Endothelial cell of umbilical vein (primary cell): ENCODE measurements at regions of chrX and their contacts with region 1.

Region 1: DNA sequence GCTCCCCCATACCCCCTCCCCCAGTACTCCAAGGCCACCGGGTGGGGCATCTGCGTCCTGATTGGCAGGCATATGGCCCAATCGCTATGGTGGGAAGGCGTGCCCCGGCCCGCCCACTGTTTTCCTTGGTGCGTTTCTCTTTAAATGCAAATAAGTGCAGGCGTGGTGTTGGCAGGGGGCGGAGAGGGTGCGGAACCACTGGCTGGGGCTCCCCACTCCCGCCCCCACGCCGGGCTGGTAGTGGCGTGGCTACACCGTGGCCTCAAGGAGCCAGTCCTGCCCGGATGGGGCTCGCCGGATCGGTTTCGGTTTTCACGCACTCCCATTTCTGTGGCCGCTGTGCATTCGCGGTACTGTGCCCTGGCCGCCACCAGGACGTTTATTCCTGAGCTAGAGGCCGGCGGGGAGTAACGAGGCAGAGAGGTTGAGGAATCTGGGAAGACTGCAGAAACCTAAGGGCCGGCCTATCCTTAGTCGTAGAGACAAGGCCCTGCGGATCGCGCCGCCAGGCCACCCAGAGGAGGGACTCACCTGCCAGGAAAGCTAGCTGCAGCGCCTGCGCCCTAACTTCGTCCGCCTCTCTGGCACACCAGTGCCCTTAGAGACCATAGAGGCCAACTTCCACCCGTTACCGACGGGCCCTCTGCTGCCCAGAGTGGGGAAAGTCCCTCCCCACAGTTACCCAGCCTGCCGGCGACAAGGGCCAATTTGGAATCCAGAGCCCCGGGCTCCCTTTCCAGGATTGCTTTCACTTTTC is 405 bp upstream of the AMER1 start:
- DNase-seq: peak; percentile 96
- H3K4me3 ChIP-seq: peak overlapping the region; percentile 71 to 80 (median 71)
- H3K27ac ChIP-seq: peak overlapping the region; percentile 70
- H3K4me1 ChIP-seq: peaks cover 3% of the 10 kb centered on the region
- H3K27me3 ChIP-seq: no peaks in the 10 kb centered on the region
- CTCF ChIP-seq: peak in 1 of 2 donors; percentile 8
- POLR2A ChIP-seq: peak; percentile 71

Region 2: GRCh38 chrX:63754860-63755582 is 450.9 kb before region 1 on chrX:
- CTCF ChIA-PET with region 1: no interaction called
- POLR2A ChIA-PET with region 1: no interaction called
- dilution Hi-C with region 1: no loop called
- intact Hi-C with region 1: loop called (anchors 2 kb)
- DNase-seq: peak; percentile 96
- H3K4me3 ChIP-seq: peak overlapping the region; percentile 6 to 63 (median 61)
- H3K27ac ChIP-seq: peak overlapping the region; percentile 80
- H3K4me1 ChIP-seq: peaks cover 9% of the 10 kb centered on the region
- H3K27me3 ChIP-seq: no peaks in the 10 kb centered on the region
- CTCF ChIP-seq: no peak
- POLR2A ChIP-seq: peak; percentile 44

Region 3: DNA sequence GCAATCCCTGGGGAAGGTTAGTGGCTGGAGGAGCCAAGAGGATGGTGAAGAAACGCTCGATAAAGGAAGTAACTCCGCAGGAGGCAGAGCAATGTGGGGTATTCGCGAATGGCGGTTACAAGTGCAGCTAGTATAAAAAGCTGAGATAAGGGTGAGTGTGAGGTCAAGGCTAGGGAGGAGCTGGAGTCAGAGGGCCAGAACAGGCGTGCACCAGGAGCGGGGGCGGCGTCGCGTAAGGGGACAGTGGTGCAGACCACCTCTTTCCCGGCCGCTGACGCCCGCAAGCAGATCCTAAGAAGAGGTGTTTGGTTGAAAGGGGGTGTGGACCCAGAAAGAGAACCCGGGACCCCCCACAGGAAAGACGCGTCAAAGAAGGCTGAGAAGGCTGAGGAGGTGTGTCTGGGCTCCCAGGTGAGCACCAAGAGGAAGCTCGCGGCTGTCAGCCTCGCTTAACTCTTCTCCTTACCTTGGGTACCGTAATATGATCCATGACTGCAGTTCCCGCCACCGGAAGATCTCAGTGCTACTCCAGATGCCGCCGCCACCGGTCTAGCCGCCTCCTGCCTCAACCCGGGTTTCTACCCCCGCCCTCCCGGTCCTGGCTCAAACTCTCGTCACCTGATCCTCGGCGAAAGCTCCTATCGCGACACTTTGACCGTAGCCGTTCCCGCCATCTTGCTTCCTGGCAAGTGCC is 189.1 kb after region 1 on chrX and contains the start of gene MTMR8:
- CTCF ChIA-PET with region 1: no interaction called
- POLR2A ChIA-PET with region 1: no interaction called
- dilution Hi-C with region 1: no loop called
- intact Hi-C with region 1: loop called (anchors 10 kb)
- DNase-seq: peak; percentile 1
- H3K4me3 ChIP-seq: peak within 1 kb of the TSS in 1 of 3 experiments; percentile 21
- H3K27ac ChIP-seq: no peak within 1 kb of the TSS
- H3K4me1 ChIP-seq: no peaks in the 10 kb centered on the region
- H3K27me3 ChIP-seq: no peaks in the 10 kb centered on the region
- CTCF ChIP-seq: no peak
- POLR2A ChIP-seq: no peak
- total RNA-seq, gene MTMR8: 0.75 and 1.1 TPM in 2 replicates